PC-9 (cell line): ENCODE measurements at regions of chrX and their contacts with region 1.

Region 1: GRCh38 chrX:9988762-9989161 is 21.6 kb downstream of the CLDN34 start:
- DNase-seq: no peak
- H3K4me3 ChIP-seq: no peak overlapping the region
- H3K27ac ChIP-seq: no peak overlapping the region
- H3K4me1 ChIP-seq: no peaks in the 10 kb centered on the region
- H3K27me3 ChIP-seq: no peaks in the 10 kb centered on the region
- CTCF ChIP-seq: peak; percentile 70

Region 2: DNA sequence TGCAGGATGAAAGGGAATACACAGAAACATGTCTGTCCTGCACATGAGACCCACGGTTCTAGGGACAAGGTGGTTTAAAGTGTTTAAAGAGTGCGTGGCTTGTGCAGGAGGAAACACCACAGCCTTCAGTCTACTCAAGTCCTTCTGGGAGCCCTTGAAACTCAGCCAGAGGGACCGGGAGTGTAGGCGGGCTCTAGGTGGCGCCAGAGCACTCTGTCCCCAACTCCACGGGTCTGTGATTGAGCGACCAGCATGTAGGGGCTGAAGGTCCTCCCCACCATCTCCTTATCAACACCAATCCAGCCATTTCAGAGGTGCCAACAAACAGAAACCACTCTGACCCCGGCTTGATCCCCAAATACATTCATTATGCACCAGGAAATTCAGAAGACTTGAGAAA is 103.6 kb before region 1 on chrX:
- CTCF ChIA-PET with region 1: no interaction called
- POLR2A ChIA-PET with region 1: no interaction called
- intact Hi-C with region 1: loop called (anchors 2 kb)
- DNase-seq: peak in 1 of 2 experiments; percentile 46
- H3K4me3 ChIP-seq: no peak overlapping the region
- H3K27ac ChIP-seq: no peak overlapping the region
- H3K4me1 ChIP-seq: no peaks in the 10 kb centered on the region
- H3K27me3 ChIP-seq: no peaks in the 10 kb centered on the region
- CTCF ChIP-seq: peak; percentile 75

Region 3: DNA sequence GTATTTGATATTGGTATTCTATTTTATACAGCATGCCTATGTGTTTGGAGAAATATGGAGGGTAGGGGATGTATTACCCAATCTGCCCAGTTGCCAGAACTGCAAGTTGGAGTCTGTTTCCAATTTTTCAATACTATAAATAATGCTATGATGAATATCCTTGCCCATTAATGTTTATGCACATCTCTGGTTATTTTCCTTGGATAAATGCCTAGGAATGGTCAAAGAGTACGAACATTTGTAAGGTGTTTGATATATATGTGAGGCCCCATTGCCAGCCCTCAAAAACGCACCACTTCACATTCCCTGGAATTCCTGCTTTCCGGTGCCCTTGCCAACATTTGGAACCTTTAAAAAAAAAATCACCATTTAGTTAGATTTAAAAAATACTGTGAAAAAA is 12.7 kb after region 1 on chrX:
- CTCF ChIA-PET with region 1: no interaction called
- POLR2A ChIA-PET with region 1: no interaction called
- intact Hi-C with region 1: no loop called
- DNase-seq: no peak
- H3K4me3 ChIP-seq: no peak overlapping the region
- H3K27ac ChIP-seq: no peak overlapping the region
- H3K4me1 ChIP-seq: peaks cover 24% of the 10 kb centered on the region
- H3K27me3 ChIP-seq: no peaks in the 10 kb centered on the region
- CTCF ChIP-seq: no peak